Left cardiac atrium (tissue), 4 donors: ENCODE measurements at regions of chr7 and their contacts with region 1.

Region 1: DNA sequence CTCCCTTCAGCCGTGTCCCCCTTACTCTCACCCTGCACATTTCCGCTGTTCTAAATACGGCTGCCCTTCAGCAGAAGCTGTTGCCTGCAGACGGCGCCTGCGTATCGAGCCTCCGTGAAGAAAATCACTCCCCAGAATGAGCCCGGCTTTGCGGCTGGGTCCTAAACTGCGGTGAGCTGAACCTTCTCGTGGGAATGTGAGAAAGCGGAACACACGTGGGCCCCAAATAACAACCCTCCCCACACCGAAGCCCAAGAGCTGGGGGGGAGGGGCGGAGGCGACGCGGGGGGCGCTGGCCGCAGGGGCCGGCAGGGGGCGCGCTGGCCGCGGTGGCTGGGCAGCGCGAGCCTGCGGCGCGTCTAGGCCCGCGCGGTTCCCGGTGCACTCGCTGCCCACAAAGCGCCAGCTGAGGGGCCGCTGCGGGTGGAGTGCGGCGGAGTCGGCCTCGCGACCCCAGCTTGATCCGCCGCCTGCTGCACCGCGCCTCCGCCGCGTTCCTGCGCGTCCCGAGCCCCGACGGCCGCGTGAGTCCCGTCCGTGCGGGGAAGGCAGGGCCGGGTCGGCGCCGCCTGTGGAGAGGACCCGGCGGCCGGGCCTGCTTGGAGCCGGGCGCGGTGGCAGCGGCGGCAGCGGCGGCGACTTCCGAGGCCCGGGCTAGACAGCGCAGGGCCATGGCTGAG is at the start of gene ZNF398:
- DNase-seq: peak; percentile 82
- ATAC-seq: peak; percentile 90 to 96
- total RNA-seq, gene ZNF398: 7.3 to 10.7 TPM

Region 2: DNA sequence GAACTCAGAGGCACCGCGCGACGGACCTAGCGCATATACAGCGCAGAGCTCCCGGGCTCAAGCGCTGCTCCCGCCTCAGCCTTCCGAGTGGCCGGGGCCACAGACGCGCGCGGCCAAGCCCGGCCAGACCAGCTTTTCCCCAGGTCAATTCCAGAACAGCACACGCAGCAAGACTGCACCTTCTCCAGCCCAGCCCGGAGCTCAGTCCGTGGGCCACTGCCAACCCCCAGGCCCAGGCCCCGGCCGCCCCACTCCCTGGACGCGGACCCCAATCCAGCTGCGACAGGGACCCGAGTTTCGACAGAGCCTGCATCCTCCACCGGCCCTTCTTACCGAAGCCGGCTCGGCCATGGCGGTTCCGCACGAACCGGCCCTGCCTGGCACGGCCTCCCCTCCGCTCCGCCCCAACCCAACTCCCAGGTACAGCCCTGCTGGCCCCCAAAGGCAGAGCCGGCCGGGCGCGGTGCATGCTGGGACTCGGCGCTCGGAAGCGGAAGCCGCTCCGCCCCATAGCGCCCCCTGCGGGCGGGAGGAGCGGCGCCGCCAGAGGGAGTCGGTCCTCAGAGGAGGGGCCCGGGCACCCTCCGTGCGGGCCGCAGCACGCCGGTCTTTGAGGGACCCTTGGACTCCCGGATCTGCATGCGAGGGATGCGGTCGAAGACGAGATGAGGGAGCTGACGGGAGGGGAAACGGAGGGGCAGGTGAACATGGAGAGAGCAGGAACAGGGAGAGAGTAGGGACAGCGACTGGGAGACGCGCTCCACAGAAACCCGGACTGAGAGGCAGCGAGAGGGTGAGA is 21.1 kb before region 1 on chr7 and contains the start of gene ZNF425:
- intact Hi-C with region 1: loop called in 1 of 2 experiments (anchors 2 kb)
- DNase-seq: peak; percentile 94
- ATAC-seq: peak; percentile 94
- total RNA-seq, gene ZNF425: 0.79 to 1.0 TPM